ENCODE measurements at regions of chr3 and their contacts with region 1.

Region 1: GRCh38 chr3:112043603-112044201 is 9.2 kb downstream of the TMPRSS7 start:
- DNase-seq: peak; percentile 62
- H3K4me3 Mint-ChIP-seq: no peak overlapping the region
- H3K27ac Mint-ChIP-seq: no peak overlapping the region
- H3K4me1 Mint-ChIP-seq: peaks cover 2% of the 10 kb centered on the region
- H3K27me3 Mint-ChIP-seq: no peaks in the 10 kb centered on the region

Region 2: GRCh38 chr3:111717601-111718000 is 326.1 kb before region 1 on chr3:
- CTCF ChIA-PET with region 1: interaction called, 13 read pairs
- POLR2A ChIA-PET with region 1: no interaction called
- intact Hi-C with region 1: loop called (anchors 1 kb)
- DNase-seq: peak; percentile 79
- H3K4me3 Mint-ChIP-seq: no peak overlapping the region
- H3K27ac Mint-ChIP-seq: no peak overlapping the region
- H3K4me1 Mint-ChIP-seq: no peaks in the 10 kb centered on the region
- H3K27me3 Mint-ChIP-seq: no peaks in the 10 kb centered on the region

Region 3: GRCh38 chr3:111989061-111989678 is 54.5 kb before region 1 on chr3:
- CTCF ChIA-PET with region 1: interaction called, 49 read pairs
- POLR2A ChIA-PET with region 1: no interaction called
- intact Hi-C with region 1: loop called (anchors 1 kb)
- DNase-seq: no peak
- H3K4me3 Mint-ChIP-seq: no peak overlapping the region
- H3K27ac Mint-ChIP-seq: no peak overlapping the region
- H3K4me1 Mint-ChIP-seq: peaks cover 27% of the 10 kb centered on the region
- H3K27me3 Mint-ChIP-seq: no peaks in the 10 kb centered on the region

Region 4: DNA sequence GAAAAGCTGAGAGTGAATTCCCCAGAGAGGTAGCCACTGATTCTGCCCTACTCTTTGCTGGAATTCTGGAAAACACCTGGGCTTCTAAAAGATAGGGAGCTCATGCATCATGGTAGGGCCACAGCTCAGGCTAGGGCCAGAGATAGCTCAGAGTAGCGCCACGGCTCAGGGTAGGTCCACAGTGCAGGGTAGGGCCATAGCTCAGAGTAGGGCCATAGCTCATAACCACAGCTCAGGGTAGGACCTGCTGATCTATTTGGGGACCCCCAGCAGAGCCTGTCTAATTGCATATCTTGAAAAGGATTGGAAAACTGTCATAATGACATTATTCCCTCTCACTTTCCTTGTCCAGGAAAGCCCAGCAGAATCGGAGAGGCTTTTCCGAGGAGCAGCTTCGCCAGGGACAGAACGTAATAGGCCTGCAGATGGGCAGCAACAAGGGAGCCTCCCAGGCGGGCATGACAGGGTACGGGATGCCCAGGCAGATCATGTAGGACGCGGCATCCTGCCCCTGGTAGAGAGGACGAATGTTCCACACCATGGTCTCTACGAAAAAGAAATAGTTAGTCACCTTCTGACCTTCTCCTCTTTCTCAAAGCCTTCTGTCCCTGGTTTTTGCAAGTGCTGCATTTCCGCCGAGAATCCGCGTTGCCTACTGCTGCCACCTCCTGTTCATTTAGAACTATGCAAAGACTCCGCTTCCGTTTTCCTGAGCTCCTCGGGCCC is 30.5 kb before region 1 on chr3:
- CTCF ChIA-PET with region 1: interaction called, 50 read pairs
- POLR2A ChIA-PET with region 1: no interaction called
- intact Hi-C with region 1: no loop called
- DNase-seq: peak; percentile 82
- H3K4me3 Mint-ChIP-seq: no peak overlapping the region
- H3K27ac Mint-ChIP-seq: peak overlapping the region; percentile 40
- H3K4me1 Mint-ChIP-seq: peaks cover 19% of the 10 kb centered on the region
- H3K27me3 Mint-ChIP-seq: no peaks in the 10 kb centered on the region

Region 5: GRCh38 chr3:112032098-112032731 is 11.5 kb before region 1 on chr3:
- CTCF ChIA-PET with region 1: interaction called, 10 read pairs
- POLR2A ChIA-PET with region 1: no interaction called
- intact Hi-C with region 1: no loop called
- DNase-seq: no peak
- H3K4me3 Mint-ChIP-seq: no peak overlapping the region
- H3K27ac Mint-ChIP-seq: no peak overlapping the region
- H3K4me1 Mint-ChIP-seq: no peaks in the 10 kb centered on the region
- H3K27me3 Mint-ChIP-seq: no peaks in the 10 kb centered on the region

Region 6: GRCh38 chr3:112074721-112075497 is 31.2 kb after region 1 on chr3:
- CTCF ChIA-PET with region 1: interaction called, 6 read pairs
- POLR2A ChIA-PET with region 1: no interaction called
- intact Hi-C with region 1: loop called (anchors 1 kb)
- DNase-seq: peak; percentile 68
- H3K4me3 Mint-ChIP-seq: peak overlapping the region; percentile 16
- H3K27ac Mint-ChIP-seq: peak overlapping the region; percentile 35
- H3K4me1 Mint-ChIP-seq: peaks cover 37% of the 10 kb centered on the region
- H3K27me3 Mint-ChIP-seq: no peaks in the 10 kb centered on the region